Activated CD4-positive, alpha-beta T cell treated with anti-CD3 and anti-CD28 coated beads for 36 hours (primary cell): ENCODE measurements at regions of chr12 and their contacts with region 1.

Region 1: DNA sequence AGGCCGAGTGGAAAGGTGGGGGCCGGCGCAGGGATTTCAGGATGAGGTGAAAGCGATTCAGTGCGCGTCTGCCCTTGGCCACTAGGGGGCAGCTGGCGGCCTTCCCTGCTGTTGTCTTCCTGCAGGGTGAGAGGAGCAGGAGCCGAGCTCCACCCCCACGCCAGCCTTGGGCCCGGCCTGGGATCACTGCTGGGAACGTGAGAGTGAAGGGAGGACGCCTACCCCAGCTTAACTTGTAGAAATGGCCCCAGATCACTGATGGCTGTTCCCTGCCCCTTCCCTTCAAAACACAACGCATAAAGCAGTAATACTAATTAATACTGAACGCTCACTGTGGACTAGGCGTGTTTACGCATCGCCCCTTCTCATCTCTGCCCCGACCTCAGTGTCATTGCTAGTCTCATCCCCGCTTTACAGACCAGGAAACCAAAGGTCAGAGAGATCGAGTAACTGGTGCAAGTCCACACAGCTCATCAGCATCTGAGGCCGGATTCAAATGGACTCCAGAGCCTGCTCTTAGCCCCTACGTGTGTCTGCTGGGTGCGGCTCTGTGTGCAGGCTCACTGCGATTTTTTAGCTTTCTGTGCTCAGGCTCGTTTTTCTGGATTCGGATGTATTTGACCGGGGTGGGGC is 24.3 kb downstream of the MVK start:
- DNase-seq: peak; percentile 80
- ATAC-seq: peak; percentile 51
- H3K4me3 Mint-ChIP-seq: no peak overlapping the region
- H3K27ac Mint-ChIP-seq: no peak overlapping the region
- H3K4me1 Mint-ChIP-seq: peaks cover 31% of the 10 kb centered on the region
- H3K27me3 Mint-ChIP-seq: no peaks in the 10 kb centered on the region

Region 2: GRCh38 chr12:109518820-109519665 is 78.9 kb before region 1 on chr12:
- CTCF ChIA-PET with region 1: no interaction called
- POLR2A ChIA-PET with region 1: no interaction called
- intact Hi-C with region 1: loop called in 1 of 2 experiments (anchors 5 kb)
- DNase-seq: peak; percentile 75
- ATAC-seq: peak; percentile 63
- H3K4me3 Mint-ChIP-seq: no peak overlapping the region
- H3K27ac Mint-ChIP-seq: no peak overlapping the region
- H3K4me1 Mint-ChIP-seq: no peaks in the 10 kb centered on the region
- H3K27me3 Mint-ChIP-seq: no peaks in the 10 kb centered on the region

Region 3: DNA sequence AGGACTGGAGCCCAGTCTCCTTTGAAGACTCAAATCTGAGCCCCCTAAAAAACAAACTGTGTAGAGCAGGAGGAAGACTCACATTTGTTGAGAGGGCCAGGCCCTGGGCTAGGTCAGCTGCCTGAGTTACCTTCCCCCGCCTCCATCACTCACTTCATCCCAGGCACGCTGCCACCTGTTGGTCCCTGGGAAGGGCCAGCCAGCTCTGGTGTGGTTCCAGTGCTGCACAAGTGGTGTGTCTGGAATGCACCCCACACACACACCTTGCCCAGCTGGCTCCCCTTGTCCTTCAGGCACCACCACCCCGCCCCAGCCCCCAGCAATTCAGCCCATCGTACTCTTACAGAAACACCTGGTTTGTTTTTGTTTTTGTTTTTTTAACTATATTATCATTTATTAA is 15.3 kb before region 1 on chr12:
- CTCF ChIA-PET with region 1: interaction called, 22 read pairs
- POLR2A ChIA-PET with region 1: no interaction called
- intact Hi-C with region 1: no loop called
- DNase-seq: no peak
- ATAC-seq: no peak
- H3K4me3 Mint-ChIP-seq: no peak overlapping the region
- H3K27ac Mint-ChIP-seq: no peak overlapping the region
- H3K4me1 Mint-ChIP-seq: no peaks in the 10 kb centered on the region
- H3K27me3 Mint-ChIP-seq: no peaks in the 10 kb centered on the region

Region 4: GRCh38 chr12:109775172-109775881 is 177.4 kb after region 1 on chr12:
- CTCF ChIA-PET with region 1: interaction called, 58 read pairs
- POLR2A ChIA-PET with region 1: no interaction called
- intact Hi-C with region 1: loop called (anchors 1 kb)
- DNase-seq: peak; percentile 87
- ATAC-seq: peak; percentile 78
- H3K4me3 Mint-ChIP-seq: no peak overlapping the region
- H3K27ac Mint-ChIP-seq: no peak overlapping the region
- H3K4me1 Mint-ChIP-seq: peaks cover 7% of the 10 kb centered on the region
- H3K27me3 Mint-ChIP-seq: peaks cover 2% of the 10 kb centered on the region